ENCODE measurements at regions of chr3 and their contacts with region 1.

Region 1: GRCh38 chr3:126870608-126871210 is 112.2 kb upstream of the PLXNA1 start:
- DNase-seq: no peak
- H3K4me3 ChIP-seq: no peak overlapping the region
- H3K27ac ChIP-seq: no peak overlapping the region
- H3K4me1 ChIP-seq: no peaks in the 10 kb centered on the region
- H3K27me3 ChIP-seq: no peaks in the 10 kb centered on the region
- CTCF ChIP-seq: no peak

Region 2: GRCh38 chr3:126654571-126655383 is 215.9 kb before region 1 on chr3 and contains the start of gene TXNRD3:
- CTCF ChIA-PET with region 1: no interaction called
- POLR2A ChIA-PET with region 1: interaction called, 24 read pairs
- intact Hi-C with region 1: no loop called
- DNase-seq: peak; percentile 61 to 91
- H3K4me3 ChIP-seq: peak within 1 kb of the TSS; percentile 64
- H3K27ac ChIP-seq: no peak within 1 kb of the TSS; the same call in 1 of the 2 replicates
- H3K4me1 ChIP-seq: peaks cover 10% of the 10 kb centered on the region; the same call in 1 of the 2 replicates
- H3K27me3 ChIP-seq: peaks cover 1% of the 10 kb centered on the region; the same call in 1 of the 2 replicates
- CTCF ChIP-seq: no peak
- total RNA-seq, gene TXNRD3: 22.5 and 27.8 TPM in 2 replicates

Region 3: DNA sequence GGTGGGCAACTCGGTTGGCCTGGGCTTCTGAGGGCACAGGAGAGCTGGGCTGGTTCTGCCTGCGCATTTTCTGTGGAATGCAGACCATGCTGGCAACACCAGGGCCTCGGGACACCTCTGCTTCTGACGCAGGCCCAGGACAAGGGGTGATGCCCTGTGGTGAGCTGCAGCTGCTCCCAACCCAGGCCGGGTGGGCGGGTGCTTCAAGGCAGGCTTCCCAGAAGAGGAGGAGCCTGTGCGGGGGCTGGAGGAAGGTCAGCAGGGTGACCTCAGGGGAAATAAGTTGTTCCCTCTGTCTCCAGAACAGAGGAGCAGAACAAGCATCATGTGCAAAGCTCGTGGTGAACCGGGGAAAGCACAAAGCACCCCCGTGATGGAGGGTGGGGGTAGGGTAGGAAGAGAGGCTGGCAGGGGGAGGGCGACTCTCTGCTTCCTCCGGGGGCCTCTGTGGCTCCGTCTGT is 101.2 kb after region 1 on chr3:
- CTCF ChIA-PET with region 1: no interaction called
- POLR2A ChIA-PET with region 1: no interaction called
- intact Hi-C with region 1: no loop called
- DNase-seq: no peak
- H3K4me3 ChIP-seq: no peak overlapping the region
- H3K27ac ChIP-seq: no peak overlapping the region
- H3K4me1 ChIP-seq: peaks cover 2% of the 10 kb centered on the region; the same call in 1 of the 2 replicates
- H3K27me3 ChIP-seq: no peaks in the 10 kb centered on the region
- CTCF ChIP-seq: no peak

Region 4: DNA sequence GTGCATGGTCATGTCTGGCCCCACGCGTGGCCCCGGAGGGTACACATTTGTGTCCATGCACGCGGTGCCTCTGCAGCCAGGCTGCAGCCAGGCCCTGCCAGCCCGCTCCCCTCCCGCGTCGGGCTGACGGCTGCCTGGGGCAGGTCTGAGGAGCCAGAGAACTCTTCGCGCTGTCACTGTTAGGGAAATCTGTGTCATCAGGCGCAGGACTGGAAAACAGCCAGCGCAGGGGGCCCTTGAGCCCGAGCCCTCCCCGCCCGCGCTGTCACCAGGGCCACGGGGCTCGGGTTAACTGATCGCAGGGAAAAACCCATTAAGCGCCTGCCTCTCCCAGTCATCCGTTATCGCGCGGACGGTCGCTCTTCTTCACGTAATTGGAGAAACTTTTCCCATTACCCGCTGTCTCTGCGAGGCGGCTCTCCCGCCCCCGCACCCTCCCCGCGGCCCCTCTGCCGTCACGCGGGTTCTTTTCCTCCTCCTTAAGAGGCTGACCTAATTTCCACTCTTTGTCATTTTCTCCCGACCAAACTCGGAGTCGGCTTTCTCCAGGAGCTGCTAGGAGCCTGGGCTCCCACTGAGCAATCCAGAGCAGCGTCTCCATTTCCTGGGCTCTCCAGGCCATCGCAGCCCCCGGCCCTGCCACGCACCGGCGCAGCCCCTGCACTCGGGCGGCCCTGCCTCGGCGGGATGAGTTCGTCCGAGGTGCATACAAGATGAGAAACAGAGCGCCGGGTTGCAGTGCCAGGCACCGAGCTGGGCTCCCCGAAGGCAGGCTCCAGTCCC is 264.7 kb after region 1 on chr3:
- CTCF ChIA-PET with region 1: no interaction called
- POLR2A ChIA-PET with region 1: no interaction called
- intact Hi-C with region 1: no loop called
- DNase-seq: no peak
- H3K4me3 ChIP-seq: no peak overlapping the region
- H3K27ac ChIP-seq: no peak overlapping the region
- H3K4me1 ChIP-seq: no peaks in the 10 kb centered on the region
- H3K27me3 ChIP-seq: peaks cover 41% of the 10 kb centered on the region
- CTCF ChIP-seq: no peak

Measured in PC-9 (cell line).